T-cell (primary cell): ENCODE measurements at regions of chr1 and their contacts with region 1.

Region 1: DNA sequence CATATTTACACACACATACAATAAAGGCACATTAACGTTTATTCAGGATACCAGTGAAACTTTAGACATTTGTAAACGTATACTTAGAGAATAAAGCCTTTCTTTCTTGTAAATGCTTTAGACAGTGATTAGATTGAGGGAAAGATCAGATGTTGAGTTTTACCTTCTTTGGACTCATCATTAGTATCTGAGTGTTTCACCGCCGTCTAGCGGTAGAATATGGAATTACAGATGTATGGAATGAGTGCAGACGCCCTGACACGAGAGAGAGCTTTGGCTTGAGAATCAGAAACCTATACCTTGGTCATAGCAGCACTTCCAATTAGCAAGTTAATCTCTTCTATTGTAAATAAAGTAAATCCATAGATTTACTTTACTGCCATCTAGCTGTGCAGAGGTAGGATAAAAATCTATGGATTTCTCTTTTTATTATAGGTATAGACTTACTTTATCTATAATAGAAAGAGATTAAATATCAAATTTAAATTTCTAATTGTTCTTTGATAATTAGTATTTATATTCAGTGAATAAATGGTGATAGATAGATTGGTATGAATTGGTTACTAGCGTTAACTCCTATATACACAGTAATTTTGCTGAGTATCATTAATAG is 12.6 kb downstream of the FLG2 start:
- DNase-seq: peak in 23 of 35 experiments; percentile 4 to 79 (median 28)
- ATAC-seq: peak; percentile 39 to 64 (median 58)
- H3K4me3 ChIP-seq: no peak overlapping the region
- H3K4me3 Mint-ChIP-seq: no peak overlapping the region
- H3K27ac ChIP-seq: no peak overlapping the region
- H3K27ac Mint-ChIP-seq: no peak overlapping the region
- H3K4me1 ChIP-seq: no peaks in the 10 kb centered on the region
- H3K4me1 Mint-ChIP-seq: no peaks in the 10 kb centered on the region
- H3K27me3 ChIP-seq: peaks cover 0 to 4% of the 10 kb centered on the region in 2 experiments
- H3K27me3 Mint-ChIP-seq: peaks cover 13 to 34% of the 10 kb centered on the region in 2 donors

Region 2: DNA sequence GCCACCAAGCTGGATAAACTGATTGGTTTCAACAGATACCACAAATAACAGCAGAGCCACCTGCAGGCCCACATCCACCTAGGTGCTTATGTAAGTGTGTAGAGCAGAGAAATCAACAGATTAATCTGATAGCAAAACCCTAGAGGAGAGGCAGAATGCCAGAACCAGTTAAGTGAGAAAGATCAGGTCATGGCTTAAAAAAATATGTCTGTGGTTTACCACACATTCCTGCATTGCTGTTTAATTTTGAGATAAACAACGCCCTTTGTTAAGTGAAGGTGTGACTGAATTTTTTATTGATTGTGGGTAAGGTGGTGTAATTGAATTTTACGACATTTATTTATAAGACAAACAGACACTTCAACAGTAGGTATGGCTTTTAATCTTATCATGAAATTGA is 45.7 kb after region 1 on chr1:
- CTCF ChIA-PET with region 1: interaction called in 1 of 2 experiments, 10 read pairs
- POLR2A ChIA-PET with region 1: no interaction called
- DNase-seq: peak in 17 of 35 experiments; percentile 2 to 61 (median 11)
- ATAC-seq: peak; percentile 43 to 86 (median 72)
- H3K4me3 ChIP-seq: no peak overlapping the region
- H3K4me3 Mint-ChIP-seq: no peak overlapping the region
- H3K27ac ChIP-seq: no peak overlapping the region
- H3K27ac Mint-ChIP-seq: peak overlapping the region; percentile 54 to 55
- H3K4me1 ChIP-seq: no peaks in the 10 kb centered on the region
- H3K4me1 Mint-ChIP-seq: peaks cover 0 to 35% (median 34%) of the 10 kb centered on the region in 3 donors
- H3K27me3 ChIP-seq: no peaks in the 10 kb centered on the region
- H3K27me3 Mint-ChIP-seq: peaks cover 26 to 36% of the 10 kb centered on the region in 2 donors